HEK293T (cell line): ENCODE measurements at regions of chr1 and their contacts with region 1.

Region 1: DNA sequence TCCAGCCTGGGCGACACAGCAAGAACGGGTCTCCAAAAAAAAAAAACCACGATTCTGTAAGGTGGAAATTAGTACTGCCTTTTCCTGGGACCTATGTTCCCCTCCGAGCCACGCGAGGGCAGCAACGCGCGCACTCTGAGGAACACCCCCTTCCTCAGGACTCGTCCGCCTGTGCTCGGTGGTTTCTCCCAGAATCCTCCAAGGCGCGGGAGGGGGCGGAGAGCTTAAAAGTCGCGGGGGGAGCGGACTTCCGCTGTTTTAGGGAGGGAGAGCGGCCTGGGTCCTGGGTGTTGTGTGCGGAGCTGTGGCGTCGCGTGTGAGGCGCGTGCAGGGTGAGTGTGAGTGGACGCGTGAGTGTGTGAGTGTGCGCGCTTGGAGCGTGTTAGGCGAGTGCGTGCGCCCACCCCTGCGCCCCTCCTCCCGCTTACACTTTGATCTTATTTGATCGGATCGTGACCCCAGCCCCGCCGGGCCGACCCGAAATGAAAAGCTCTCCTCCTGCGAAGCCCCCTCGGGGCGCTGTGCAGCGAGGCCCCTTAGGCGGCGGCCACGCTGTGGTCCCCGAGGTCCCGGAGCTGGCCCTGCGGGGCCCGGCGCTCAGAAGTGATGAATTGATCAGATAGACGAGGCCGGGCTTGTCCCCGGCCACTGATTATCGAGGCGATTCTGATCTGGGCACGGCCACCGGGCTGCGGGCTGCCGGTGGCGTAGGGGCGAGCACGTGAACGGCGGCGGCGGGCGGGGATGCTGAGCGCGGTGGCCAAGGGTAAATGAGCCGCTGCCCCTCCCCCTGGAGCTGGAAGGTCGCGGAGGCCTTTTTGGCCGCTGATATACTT is 9.6 kb downstream of the TMEM167B start:
- DNase-seq: peak; percentile 97

Region 2: DNA sequence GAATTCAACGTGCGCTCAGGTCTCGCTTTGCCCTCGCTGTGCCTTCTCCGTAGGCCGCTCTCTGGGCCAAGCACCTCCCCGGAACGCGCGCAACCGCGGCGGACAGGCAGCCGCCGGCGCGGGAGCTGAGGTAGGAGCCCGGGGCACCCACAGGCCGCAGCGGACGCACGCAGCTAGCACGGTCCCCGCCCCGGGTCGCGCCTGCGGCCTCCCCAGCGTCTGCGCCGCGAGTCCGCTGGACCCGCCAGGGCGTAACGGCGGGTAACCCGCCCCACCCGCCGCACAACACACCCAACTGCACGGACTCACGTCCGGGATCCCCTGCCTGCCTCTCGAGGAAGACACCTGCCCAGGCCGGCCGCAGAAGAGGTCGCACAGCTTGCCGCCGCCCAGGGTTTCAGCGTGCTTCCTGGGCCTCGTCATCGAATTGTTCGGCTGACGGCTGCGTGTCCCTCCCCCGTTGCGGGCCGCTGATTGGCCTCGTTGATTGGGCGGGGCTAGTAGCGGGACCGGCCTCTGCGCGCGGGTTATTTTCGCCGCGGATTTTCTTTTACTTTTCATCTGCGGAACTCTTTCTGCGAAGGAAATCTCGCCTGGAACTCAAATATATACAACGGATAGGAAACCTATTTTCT is 137.0 kb before region 1 on chr1 and contains the start of gene CLCC1:
- CTCF ChIA-PET with region 1: no interaction called
- POLR2A ChIA-PET with region 1: interaction called, 11 read pairs
- DNase-seq: peak; percentile 97

Region 3: GRCh38 chr1:109075531-109076490 is 24.3 kb before region 1 on chr1 and contains the start of gene TAF13:
- CTCF ChIA-PET with region 1: interaction called, 3 read pairs
- POLR2A ChIA-PET with region 1: interaction called, 34 read pairs
- DNase-seq: peak; percentile 98

Region 4: GRCh38 chr1:109112652-109113285 is 12.6 kb after region 1 on chr1:
- CTCF ChIA-PET with region 1: interaction called, 30 read pairs
- POLR2A ChIA-PET with region 1: interaction called, 64 read pairs
- DNase-seq: peak; percentile 97

Region 5: DNA sequence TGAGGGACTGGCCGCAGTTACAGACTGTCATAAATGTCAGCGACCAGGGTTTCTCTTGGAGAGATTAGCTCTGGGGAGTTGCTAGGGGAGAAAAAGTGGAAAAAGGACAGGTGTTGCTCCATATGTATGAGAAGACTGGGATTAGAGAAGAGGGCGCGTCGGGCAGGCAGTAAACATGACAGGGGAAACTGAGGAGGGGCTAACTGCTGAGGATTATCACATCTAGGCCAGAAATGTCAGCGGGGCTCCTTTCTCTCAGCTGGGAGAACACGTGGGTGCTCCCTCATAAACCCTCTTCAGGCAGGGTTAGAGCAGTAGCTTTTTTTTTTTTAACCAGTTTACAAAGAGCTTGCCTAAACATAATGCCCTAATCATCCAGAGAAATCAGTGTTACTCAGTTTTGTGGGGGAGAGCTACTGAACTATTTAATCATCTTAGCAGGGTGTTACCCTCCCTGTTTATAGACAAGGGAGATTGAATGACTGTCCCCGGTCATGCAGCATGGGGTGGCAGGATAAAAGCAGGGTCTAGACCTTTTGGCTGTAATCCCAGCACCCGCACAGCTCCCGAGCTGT is 48.9 kb after region 1 on chr1:
- CTCF ChIA-PET with region 1: no interaction called
- POLR2A ChIA-PET with region 1: interaction called, 10 read pairs
- DNase-seq: no peak

Region 6: DNA sequence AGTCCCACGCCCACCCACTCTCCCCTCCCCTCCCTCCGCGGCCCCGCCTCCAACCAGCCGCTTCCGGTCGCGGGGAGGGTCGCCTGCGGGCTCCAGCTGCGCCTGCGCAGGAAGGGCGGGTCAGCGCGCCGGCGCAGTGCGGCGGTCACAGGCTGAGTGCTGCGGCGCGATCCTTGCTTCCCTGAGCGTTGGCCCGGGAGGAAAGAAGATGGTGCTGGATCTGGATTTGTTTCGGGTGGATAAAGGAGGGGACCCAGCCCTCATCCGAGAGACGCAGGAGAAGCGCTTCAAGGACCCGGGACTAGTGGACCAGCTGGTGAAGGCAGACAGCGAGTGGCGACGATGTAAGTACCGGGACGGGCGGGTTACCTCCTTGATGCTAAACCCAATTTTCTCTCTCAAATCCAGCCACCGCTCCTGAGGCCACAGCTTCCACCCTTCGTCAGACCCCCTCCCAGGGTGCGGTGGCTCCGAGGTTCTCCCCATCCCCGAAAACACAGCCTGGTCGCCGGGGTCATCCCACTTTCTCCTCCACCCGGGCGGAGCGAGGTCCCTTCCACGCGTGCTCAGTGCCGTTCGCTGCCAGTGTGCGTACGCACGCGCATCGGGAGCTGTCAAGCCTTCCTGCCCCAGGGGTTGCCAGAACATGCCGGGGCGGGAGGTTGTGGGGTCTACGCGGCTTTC is 113.8 kb after region 1 on chr1 and contains the start of gene SARS1:
- CTCF ChIA-PET with region 1: no interaction called
- POLR2A ChIA-PET with region 1: interaction called, 12 read pairs
- DNase-seq: peak; percentile 99